Left cardiac atrium (tissue), 4 donors: ENCODE measurements at regions of chr1 and their contacts with region 1.

Region 1: DNA sequence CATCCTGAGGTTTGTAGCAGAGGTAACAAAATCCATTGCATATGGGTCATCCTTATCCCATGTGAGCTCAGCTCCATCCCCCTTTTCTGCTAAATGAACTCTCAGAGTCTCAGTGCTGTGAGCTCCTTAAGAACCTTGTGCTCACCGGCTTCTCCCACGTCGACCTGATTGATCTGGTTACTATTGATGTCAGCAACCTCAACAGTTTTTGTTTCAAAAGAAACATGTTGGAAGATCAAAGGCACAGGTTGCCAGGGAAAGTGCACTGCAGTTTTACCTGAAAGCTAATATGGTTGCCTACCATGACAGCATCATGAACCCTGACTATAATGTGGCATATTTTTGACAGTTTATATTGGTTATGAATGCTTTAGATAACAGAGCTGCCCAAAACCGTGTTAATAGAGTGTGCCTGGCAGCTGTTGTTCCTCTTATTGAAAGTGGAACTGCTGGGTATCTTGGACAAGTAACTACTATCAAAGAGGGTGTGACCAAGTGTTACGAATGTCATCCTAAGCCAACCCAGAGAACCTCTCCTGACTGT is 131.4 kb downstream of the HS2ST1 start:
- DNase-seq: no peak
- ATAC-seq: no peak

Region 2: DNA sequence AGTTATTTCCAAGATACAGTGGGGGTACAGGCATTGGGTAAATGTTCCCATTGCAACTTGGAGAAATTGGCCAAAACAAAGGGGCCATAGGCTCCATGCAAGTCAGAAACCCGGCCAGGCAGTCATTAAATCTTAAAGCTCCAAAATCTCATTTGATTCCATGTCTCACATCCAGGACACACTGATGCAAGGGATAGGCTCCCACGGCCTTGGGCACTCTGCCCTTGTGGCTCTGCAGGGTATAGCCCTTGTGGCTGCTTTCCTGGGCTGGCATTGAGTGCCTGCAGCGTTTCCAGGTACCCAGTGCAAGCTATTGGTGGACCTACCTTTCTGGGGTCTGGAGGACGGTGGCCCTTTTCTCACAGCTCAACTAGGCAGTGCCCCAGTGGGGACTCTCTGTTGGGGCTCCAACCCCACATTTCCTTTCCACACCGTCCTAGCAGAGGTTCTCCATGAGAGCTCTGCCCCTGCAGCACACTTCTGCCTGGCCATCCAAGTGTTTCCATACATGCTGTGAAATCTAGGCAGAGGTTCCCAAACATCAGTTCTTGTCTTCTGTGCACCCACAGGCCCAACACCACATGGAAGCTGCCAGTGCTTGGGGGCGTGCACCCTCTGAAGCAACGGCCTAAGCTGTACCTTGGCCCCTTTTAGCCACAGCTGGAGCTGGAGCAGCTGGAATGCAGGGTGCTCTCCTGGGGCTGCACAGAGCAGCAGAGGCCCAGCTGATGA is 64.2 kb before region 1 on chr1:
- intact Hi-C with region 1: no loop called
- DNase-seq: no peak
- ATAC-seq: no peak

Region 3: DNA sequence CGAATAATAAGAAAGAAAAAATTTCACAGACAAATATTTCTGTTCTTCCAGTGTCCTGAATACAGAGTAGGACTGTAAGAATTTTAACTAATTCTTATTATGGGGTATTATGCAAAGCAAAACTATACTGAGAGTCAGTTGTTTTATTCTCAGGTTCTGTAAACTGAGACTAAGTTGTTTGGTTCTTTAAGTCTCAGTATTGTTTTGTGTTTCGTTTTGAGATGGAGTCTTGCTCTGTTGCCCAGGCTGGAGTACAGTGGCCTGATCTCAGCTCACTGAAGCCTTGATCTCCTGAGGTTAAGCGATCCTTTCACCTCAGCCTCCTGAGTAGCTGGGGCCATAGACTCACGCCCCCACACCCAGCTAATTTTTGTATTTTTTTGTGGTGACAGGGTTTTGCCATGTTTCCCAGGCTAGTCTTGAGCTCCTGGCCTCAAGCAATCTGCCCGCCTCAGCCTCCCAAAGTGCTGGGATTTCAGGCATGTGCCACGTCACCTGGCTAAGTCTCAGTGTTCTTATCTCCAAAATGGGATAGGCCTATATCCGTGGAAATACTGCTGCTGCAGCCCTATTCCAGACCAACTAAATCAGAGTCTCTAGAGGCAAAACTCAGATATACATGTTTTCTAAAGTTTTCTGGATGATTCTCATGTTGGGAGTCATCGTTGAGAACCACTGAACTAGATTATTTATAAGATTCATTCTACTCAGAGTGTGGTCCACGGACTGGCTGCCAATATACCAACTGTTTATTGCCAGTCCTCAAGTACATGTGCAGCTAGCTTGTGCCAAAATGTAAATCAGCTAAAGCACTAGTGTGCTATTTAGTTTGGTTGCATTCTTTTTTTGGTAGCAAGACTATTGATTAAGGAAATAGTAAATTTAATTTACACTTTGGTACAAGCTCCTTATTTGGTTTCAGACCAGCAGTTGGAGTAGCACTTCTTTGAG is 14.8 kb before region 1 on chr1:
- intact Hi-C with region 1: loop called in 1 of 2 experiments (anchors 1 kb)
- DNase-seq: no peak
- ATAC-seq: no peak